ENCODE measurements at regions of chr20 and their contacts with region 1.

Region 1: GRCh38 chr20:54199721-54200176 is 8.1 kb upstream of the PFDN4 start:
- DNase-seq: peak; percentile 88
- ATAC-seq: peak; percentile 76

Region 2: GRCh38 chr20:54028276-54029011 is 171.3 kb before region 1 on chr20:
- intact Hi-C with region 1: no loop called
- DNase-seq: no peak
- ATAC-seq: no peak

Region 3: GRCh38 chr20:54058420-54059139 is 141.2 kb before region 1 on chr20:
- intact Hi-C with region 1: no loop called
- DNase-seq: no peak
- ATAC-seq: no peak

Region 4: GRCh38 chr20:54093423-54094267 is 106.1 kb before region 1 on chr20:
- intact Hi-C with region 1: loop called (anchors 5 kb)
- DNase-seq: no peak
- ATAC-seq: peak; percentile 73

Region 5: DNA sequence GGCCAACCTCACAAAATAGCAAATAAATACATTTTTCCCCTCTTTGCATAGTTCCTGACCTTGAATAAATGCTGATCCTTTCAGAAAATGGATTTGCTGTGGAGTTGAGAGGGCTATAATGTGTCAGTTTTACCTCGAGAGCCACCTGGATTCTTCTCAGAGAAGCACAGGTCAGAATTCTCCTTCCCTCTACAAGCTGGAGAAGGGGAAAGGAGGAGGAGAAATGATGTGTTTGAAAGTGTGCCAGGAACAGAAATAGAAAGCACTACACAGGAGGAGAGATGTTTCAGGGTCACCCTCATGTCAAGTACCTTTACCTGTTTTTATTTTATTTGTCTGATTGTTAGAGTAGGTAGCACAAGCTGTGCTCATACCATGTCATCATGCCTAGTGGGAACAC is 634.5 kb after region 1 on chr20:
- intact Hi-C with region 1: loop called (anchors 10 kb)
- DNase-seq: no peak
- ATAC-seq: no peak